Common myeloid progenitor, CD34-positive (primary cell): ENCODE measurements at regions of chr11 and their contacts with region 1.

Region 1: GRCh38 chr11:114135737-114136151 is 76.2 kb downstream of the ZBTB16 start:
- DNase-seq: peak; percentile 84 to 95 (median 92)
- H3K4me3 ChIP-seq: peak overlapping the region in 4 of 7 experiments; percentile 9 to 42 (median 27)
- H3K27ac ChIP-seq: peak overlapping the region; percentile 81 to 91
- H3K4me1 ChIP-seq: peaks cover 28 to 86% (median 56%) of the 10 kb centered on the region in 4 experiments
- H3K27me3 ChIP-seq: no peaks in the 10 kb centered on the region

Region 2: DNA sequence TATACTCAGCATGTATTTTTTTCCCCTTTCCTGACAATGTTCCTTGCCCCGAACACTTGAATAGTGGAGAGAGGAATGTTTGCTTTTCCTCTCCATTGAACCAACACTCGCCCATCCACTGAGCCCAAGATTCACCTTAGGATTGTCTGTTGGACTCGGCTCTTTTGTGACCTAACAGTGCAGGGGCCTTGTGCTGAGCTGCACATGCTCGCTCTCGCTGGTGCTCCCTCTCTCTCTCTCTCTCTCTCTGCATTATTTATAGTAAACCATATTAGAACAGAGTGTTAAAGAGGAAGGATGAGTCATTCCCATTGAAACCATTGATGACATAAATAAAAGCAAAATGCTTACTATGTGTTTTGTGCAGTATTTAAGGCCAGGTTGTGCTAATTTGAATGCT is 55.5 kb before region 1 on chr11:
- CTCF ChIA-PET with region 1: interaction called, 38 read pairs
- POLR2A ChIA-PET with region 1: interaction called, 9 read pairs
- DNase-seq: peak; percentile 65 to 87 (median 79)
- H3K4me3 ChIP-seq: no peak overlapping the region
- H3K27ac ChIP-seq: peak overlapping the region; percentile 92 to 95
- H3K4me1 ChIP-seq: peaks cover 44 to 97% (median 93%) of the 10 kb centered on the region in 4 experiments
- H3K27me3 ChIP-seq: no peaks in the 10 kb centered on the region

Region 3: GRCh38 chr11:114124601-114125144 is 11.1 kb before region 1 on chr11:
- CTCF ChIA-PET with region 1: interaction called, 12 read pairs
- POLR2A ChIA-PET with region 1: no interaction called
- DNase-seq: no peak
- H3K4me3 ChIP-seq: no peak overlapping the region
- H3K27ac ChIP-seq: no peak overlapping the region
- H3K4me1 ChIP-seq: peaks cover 0 to 24% (median 6%) of the 10 kb centered on the region in 4 experiments
- H3K27me3 ChIP-seq: no peaks in the 10 kb centered on the region

Region 4: GRCh38 chr11:114148013-114148382 is 12.3 kb after region 1 on chr11:
- CTCF ChIA-PET with region 1: interaction called, 41 read pairs
- POLR2A ChIA-PET with region 1: no interaction called
- DNase-seq: peak; percentile 56 to 94 (median 82)
- H3K4me3 ChIP-seq: no peak overlapping the region
- H3K27ac ChIP-seq: peak overlapping the region in 1 of 2 experiments; percentile 2
- H3K4me1 ChIP-seq: peaks cover 0 to 17% (median 8%) of the 10 kb centered on the region in 4 experiments
- H3K27me3 ChIP-seq: no peaks in the 10 kb centered on the region